Mammary epithelial cell (primary cell): ENCODE measurements at regions of chr16 and their contacts with region 1.

Region 1: DNA sequence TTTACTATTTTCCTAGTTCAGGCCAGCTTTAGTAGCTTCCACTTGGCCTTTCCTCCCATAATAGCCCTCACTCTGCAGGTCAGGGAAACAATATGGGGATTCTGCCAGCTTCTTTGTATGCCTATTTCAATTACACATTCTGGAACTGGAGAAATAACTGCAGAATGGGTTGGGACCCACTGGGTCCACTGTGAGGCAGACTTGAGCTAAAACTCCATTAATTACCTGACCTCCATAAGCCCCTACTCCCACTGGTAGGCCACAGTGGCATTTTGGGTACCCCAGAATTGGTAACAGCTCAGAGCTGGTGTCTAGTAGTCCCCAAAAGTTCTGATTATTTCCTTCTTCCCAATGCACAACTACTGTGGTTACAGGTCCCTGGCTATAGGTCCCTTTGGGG is 16.7 kb upstream of the TENT4B start:
- DNase-seq: no peak
- H3K4me3 ChIP-seq: no peak overlapping the region
- H3K27ac ChIP-seq: no peak overlapping the region
- H3K4me1 ChIP-seq: no peaks in the 10 kb centered on the region
- H3K27me3 ChIP-seq: peaks cover 1% of the 10 kb centered on the region
- CTCF ChIP-seq: no peak

Region 2: DNA sequence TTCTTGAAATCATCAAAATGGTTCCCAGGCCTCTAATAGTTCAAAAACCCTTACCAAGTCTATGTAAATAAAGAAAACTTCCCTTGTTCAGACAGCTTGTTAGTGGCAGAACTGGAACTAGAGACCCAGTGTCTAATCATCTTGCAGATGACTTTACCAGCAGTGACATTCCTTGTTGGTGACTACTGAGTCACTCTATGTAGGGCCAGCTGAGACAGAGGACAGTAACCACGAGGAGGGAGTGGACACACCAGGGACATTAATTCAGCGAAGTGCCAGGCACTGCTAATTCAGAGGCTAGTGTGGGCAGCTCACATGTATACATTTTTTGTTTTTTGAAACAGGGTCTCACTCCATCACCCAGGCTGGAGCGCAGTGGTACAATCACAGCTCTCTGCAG is 76.7 kb before region 1 on chr16:
- CTCF ChIA-PET with region 1: no interaction called
- dilution Hi-C with region 1: loop called (anchors 5 kb)
- in situ Hi-C with region 1: no loop called
- intact Hi-C with region 1: no loop called
- DNase-seq: no peak
- H3K4me3 ChIP-seq: no peak overlapping the region
- H3K27ac ChIP-seq: no peak overlapping the region
- H3K4me1 ChIP-seq: no peaks in the 10 kb centered on the region
- H3K27me3 ChIP-seq: peaks cover 2% of the 10 kb centered on the region
- CTCF ChIP-seq: no peak